ENCODE measurements at regions of chr20 and their contacts with region 1.

Region 1: DNA sequence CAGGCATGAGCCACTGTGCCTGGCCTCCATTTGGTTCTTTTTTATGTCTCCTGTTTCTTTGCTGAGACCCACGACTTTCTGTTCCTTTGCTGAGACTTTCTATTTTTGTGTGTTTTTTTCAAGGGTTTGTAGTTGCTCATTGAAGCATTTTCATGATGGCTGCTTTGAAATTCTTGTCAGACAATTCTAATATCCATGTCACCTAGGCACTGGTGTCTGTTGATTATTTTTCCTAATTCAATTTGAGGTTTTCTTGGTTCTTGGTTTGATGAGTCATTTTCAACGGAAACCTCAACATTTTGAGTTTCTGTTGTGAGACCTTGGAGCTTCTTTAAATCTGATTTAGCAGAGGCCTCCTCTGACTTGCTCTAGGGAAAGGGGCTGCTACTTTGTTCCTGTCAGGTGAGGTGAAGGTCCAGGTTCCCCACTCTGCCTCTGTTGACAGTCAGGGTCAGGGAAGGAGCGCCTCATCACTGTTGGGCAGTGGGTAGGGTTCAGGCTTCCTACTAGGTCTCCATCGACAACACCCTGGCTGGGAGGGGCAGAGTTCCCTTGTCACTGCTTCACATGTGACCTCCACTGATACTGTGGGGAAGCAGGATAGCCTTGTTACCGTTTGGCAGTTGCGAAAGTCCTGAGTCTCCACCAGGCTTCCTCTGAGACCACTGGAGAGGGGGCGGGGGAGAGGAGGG is 67.2 kb upstream of the RNF24 start:
- DNase-seq: peak; percentile 50
- H3K4me3 Mint-ChIP-seq: peak overlapping the region; percentile 78
- H3K27ac Mint-ChIP-seq: peak overlapping the region; percentile 92
- H3K4me1 Mint-ChIP-seq: peaks cover 56% of the 10 kb centered on the region
- H3K27me3 Mint-ChIP-seq: peaks cover 2% of the 10 kb centered on the region

Region 2: DNA sequence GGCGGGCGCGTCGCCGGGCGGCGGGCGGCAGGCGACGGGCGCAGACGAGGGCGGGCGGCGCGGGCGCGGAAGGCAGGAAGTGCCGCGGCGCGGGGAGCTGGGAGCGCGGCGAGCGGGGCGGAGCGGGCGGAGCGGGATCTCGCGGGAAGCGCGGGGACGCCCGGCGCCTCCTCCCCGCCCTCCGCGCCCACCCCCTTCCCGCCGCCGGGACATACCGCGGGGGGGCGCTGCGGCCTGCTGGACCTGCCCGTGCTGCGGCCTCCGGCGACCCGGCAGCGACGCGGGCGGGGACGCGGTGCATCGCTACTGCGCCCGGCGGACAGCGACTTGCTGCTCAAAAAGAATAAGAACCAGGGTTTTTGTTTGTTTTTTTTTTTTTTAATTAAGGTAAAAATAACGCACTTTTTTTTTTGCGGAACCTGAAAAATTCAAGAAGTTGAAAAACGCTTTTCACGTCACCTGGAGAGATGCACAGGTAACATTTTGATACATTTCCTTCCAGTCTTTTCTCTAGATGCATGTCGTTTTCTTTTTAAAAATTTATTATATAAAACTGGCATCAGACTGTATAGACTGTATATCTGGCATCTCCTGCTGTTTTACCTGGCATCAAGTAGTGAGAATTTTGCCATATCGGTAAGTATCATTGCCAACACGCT is 295.8 kb before region 1 on chr20 and contains the start of gene CENPB:
- intact Hi-C with region 1: loop called (anchors 2 kb)
- DNase-seq: peak; percentile 88
- H3K4me3 Mint-ChIP-seq: peak within 1 kb of the TSS; percentile 86
- H3K27ac Mint-ChIP-seq: peak within 1 kb of the TSS; percentile 70
- H3K4me1 Mint-ChIP-seq: peaks cover 39% of the 10 kb centered on the region
- H3K27me3 Mint-ChIP-seq: no peaks in the 10 kb centered on the region
- total RNA-seq, gene CENPB: 72.3 and 80.2 TPM in 2 replicates

Region 3: DNA sequence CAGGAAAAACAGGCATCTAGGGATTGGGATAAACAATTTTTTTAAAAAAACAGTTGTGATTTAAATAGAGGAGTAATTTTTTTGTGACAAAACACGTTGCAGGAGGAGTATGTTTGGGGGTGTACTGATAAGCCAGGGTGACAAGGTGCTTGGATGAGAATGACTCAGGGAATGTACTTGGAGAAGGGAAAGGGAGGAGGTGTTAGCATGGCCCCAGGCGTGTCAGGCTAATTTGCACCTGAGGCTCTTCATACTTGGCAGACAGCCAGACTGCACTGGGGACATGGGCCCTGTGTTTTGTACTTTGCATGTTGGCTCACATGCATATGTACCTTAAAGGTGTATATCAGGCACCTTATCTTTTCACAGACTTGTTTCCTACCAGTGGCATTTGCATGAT is 170.6 kb before region 1 on chr20:
- intact Hi-C with region 1: loop called (anchors 1 kb)
- DNase-seq: no peak
- H3K4me3 Mint-ChIP-seq: no peak overlapping the region
- H3K27ac Mint-ChIP-seq: no peak overlapping the region
- H3K4me1 Mint-ChIP-seq: peaks cover 56% of the 10 kb centered on the region
- H3K27me3 Mint-ChIP-seq: no peaks in the 10 kb centered on the region

Region 4: DNA sequence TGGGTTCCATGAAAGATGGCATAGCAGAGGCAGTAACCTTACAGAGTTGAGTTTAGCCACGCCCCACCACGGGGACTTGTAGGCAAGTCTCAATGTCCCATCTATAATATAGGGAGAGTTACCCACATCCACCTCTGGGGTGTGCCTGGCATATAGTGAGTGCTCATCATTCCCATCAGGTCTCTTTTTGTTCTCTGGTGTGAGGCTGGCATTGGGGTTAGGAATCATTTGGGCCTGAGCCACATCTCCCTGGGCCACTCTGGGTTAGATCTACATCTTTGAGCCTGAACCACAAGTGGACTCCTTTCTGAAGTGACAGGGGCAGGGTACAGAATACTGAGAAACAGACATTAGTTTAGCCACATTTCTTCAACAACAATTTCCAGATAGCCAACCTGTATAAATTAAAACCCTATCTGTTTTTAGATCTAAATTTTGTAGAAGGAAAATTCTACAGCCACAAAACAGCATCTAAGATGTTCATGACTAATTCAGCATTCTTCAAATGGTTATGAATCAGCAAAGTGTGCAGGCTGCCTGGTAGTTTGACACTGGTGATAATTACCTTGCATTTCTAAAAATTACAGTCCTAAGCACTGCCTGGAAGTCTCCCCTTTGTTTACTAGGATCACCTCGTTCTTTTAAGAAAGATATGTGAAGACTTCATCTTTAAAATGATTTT is 87.3 kb before region 1 on chr20:
- intact Hi-C with region 1: loop called (anchors 1 kb)
- DNase-seq: no peak
- H3K4me3 Mint-ChIP-seq: peak overlapping the region; percentile 55
- H3K27ac Mint-ChIP-seq: peak overlapping the region; percentile 90
- H3K4me1 Mint-ChIP-seq: peaks cover 57% of the 10 kb centered on the region
- H3K27me3 Mint-ChIP-seq: no peaks in the 10 kb centered on the region

Region 5: DNA sequence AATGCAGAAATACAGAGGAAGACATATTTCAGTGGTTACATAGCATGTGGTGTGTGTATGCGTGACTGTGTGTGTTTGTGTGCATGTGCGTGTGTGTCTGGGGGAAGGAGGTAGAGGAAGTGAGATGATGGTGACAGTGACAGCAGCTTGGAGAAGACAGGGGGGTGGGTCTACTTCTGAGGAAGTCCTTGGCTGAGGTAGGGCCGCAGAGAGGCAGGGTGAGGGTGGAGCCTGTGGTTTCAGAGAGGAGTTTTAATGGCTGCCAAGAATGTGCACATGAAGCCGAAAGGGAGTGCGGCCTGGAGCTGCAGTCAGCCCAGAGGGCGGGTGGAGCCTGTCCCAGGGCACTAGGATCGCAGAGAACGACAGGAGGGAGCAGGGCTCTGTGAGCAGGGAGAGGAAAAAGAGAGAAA is 44.5 kb before region 1 on chr20:
- intact Hi-C with region 1: loop called (anchors 5 kb)
- DNase-seq: peak; percentile 82
- H3K4me3 Mint-ChIP-seq: peak overlapping the region; percentile 82
- H3K27ac Mint-ChIP-seq: peak overlapping the region; percentile 98
- H3K4me1 Mint-ChIP-seq: peaks cover 24% of the 10 kb centered on the region
- H3K27me3 Mint-ChIP-seq: no peaks in the 10 kb centered on the region